Posterior vena cava (tissue), 2 donors: ENCODE measurements at regions of chr14 and their contacts with region 1.

Region 1: DNA sequence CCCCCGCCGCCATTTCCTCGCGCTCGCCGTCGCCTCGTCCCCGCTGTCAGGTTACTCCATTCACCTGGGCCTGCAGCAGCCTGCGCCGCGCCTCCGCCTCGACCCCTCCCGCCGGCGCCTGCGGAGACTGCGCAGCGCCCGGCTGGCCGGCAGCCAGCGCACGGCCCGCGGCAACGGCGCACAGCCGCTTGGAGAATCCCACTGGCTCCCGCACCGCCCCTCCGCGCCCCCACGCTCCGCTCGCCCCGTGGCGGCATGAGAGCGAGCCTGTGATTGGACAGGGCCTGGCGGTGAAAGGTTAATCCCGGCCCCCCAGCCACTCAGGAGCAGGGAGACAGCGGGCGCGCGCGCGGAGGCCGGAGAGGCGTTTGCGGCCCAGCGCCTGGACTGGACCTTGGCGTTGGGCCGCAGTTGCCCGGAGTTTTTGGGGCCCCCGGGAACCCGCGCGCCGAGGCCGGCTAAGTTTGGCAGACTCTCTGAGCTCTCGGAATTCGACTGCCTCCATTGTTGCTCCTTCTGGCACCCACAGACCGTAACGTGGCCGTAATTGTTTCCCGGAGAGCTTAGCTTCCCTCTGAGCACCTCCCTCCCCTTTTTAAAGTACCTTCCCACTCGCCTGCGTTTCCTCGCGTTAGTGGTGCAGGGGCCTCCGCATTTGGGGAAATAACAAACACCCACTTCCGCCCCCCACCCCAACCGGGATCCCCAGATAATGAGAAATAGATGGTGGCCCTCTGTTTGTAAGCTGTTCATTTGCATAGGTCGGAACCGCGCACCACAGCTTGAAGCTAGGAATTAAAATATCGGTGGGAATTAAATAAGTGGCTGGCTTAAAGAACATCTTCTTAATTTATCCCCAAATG is at the start of gene DICER1:
- DNase-seq: peak; percentile 99
- total RNA-seq, gene DICER1: 52.4 to 52.5 TPM

Region 2: GRCh38 chr14:94173885-94174603 is 983.5 kb before region 1 on chr14 and contains the start of gene PPP4R4:
- intact Hi-C with region 1: loop called in 1 of 2 experiments (anchors 5 kb)
- DNase-seq: peak; percentile 91
- total RNA-seq, gene PPP4R4: 0.32 to 0.38 TPM

Region 3: GRCh38 chr14:95614349-95614748 is 456.8 kb after region 1 on chr14:
- intact Hi-C with region 1: loop called in 1 of 2 experiments (anchors 10 kb)
- DNase-seq: no peak